Right cardiac atrium (tissue), 5 donors: ENCODE measurements at regions of chr2 and their contacts with region 1.

Region 1: GRCh38 chr2:189466660-189467059 is 25.4 kb downstream of the WDR75 start:
- DNase-seq: no peak
- ATAC-seq: peak in 1 of 2 donors; percentile 67
- H3K4me3 ChIP-seq: no peak overlapping the region
- H3K27ac ChIP-seq: no peak overlapping the region
- H3K4me1 ChIP-seq: no peaks in the 10 kb centered on the region
- H3K27me3 ChIP-seq: no peaks in the 10 kb centered on the region

Region 2: GRCh38 chr2:189521699-189522434 is 55.2 kb after region 1 on chr2:
- intact Hi-C with region 1: no loop called
- DNase-seq: no peak
- ATAC-seq: no peak
- H3K4me3 ChIP-seq: no peak overlapping the region
- H3K27ac ChIP-seq: no peak overlapping the region
- H3K4me1 ChIP-seq: no peaks in the 10 kb centered on the region
- H3K27me3 ChIP-seq: no peaks in the 10 kb centered on the region

Region 3: GRCh38 chr2:189579592-189580186 is 113.0 kb after region 1 on chr2:
- intact Hi-C with region 1: loop called in 1 of 4 experiments (anchors 10 kb)
- DNase-seq: no peak
- ATAC-seq: peak; percentile 32 to 47
- H3K4me3 ChIP-seq: peak overlapping the region; percentile 79
- H3K27ac ChIP-seq: peak overlapping the region; percentile 56
- H3K4me1 ChIP-seq: peaks cover 8% of the 10 kb centered on the region
- H3K27me3 ChIP-seq: no peaks in the 10 kb centered on the region